Activated CD8-positive, alpha-beta T cell treated with anti-CD3 and anti-CD28 coated beads, Interleukin-2, amount 10 ng/mL, durations not matched to agents 7 days and 5 days (primary cell): ENCODE measurements at regions of chr22 and their contacts with region 1.

Region 1: DNA sequence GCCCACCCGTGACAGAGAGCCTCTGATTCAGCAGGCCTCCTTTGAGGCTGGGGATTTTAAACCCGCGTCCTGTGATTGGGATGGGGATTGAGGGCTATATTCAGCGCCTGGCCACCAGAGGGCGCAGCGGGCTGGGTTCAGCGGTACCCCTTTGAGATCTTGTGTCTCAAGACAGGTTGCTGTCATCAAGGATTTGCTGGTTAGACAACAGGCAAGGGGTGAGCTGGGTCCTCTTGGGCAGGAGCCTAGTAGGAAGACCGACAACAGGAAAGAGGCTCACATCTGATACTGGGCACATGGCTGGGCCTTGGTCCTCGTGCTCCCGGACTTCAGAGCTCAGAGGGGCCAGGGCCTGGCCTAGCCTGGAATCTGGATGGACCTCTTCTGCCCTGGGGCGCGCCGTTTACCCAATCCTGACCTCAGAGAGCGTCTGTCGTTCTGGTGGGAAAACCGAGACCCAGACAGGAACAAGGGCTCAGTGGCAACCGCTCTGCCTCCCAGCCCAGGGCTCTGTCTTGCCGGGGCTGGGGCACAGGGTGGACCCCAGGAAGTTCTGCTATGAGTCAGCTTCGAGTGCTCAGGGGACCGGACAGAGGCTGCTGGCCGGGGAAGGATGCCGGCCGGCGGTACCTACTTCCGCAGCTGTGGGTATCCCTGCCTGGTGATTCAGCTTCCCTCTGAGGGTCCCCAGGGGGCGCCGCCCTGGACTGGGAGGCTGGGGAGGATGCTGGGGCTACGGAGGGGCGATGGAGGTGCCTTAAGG is 929 bp upstream of the SLC35E4 start:
- DNase-seq: peak; percentile 92
- ATAC-seq: peak; percentile 67
- H3K4me3 Mint-ChIP-seq: peak overlapping the region; percentile 76
- H3K27ac Mint-ChIP-seq: peak overlapping the region; percentile 86
- H3K4me1 Mint-ChIP-seq: peaks cover 18% of the 10 kb centered on the region
- H3K27me3 Mint-ChIP-seq: no peaks in the 10 kb centered on the region

Region 2: DNA sequence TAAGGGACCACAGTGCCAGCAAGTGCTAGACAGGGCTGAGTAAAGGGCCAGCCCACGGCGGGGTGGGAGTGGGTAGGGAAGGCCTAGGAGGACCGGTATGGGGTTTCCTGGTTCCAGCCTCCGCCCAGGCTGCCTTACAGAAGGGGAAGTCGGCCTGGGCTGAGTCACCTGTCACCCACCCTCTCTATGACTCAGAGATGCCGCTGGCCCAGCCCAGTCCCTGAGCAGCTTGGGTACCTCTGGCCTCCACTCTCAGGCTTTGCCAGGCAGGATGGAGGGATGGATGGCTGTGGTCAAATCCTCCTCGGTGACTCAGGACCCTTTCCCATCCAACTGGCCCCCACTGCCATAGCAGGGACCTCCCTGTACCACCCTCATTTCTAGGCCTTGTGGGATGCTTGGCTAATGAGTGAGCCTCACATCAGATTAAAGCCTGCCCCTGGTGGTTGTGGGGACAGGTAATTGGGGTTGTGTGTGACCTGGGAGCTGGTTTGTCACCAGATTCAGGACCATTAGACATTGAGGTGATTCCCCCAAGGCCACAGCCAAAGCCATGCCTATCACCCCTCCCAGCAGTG is 14.9 kb after region 1 on chr22:
- CTCF ChIA-PET with region 1: interaction called, 57 read pairs
- POLR2A ChIA-PET with region 1: interaction called, 8 read pairs
- DNase-seq: peak; percentile 77
- ATAC-seq: peak; percentile 96
- H3K4me3 Mint-ChIP-seq: no peak overlapping the region
- H3K27ac Mint-ChIP-seq: peak overlapping the region; percentile 76
- H3K4me1 Mint-ChIP-seq: peaks cover 25% of the 10 kb centered on the region
- H3K27me3 Mint-ChIP-seq: no peaks in the 10 kb centered on the region

Region 3: DNA sequence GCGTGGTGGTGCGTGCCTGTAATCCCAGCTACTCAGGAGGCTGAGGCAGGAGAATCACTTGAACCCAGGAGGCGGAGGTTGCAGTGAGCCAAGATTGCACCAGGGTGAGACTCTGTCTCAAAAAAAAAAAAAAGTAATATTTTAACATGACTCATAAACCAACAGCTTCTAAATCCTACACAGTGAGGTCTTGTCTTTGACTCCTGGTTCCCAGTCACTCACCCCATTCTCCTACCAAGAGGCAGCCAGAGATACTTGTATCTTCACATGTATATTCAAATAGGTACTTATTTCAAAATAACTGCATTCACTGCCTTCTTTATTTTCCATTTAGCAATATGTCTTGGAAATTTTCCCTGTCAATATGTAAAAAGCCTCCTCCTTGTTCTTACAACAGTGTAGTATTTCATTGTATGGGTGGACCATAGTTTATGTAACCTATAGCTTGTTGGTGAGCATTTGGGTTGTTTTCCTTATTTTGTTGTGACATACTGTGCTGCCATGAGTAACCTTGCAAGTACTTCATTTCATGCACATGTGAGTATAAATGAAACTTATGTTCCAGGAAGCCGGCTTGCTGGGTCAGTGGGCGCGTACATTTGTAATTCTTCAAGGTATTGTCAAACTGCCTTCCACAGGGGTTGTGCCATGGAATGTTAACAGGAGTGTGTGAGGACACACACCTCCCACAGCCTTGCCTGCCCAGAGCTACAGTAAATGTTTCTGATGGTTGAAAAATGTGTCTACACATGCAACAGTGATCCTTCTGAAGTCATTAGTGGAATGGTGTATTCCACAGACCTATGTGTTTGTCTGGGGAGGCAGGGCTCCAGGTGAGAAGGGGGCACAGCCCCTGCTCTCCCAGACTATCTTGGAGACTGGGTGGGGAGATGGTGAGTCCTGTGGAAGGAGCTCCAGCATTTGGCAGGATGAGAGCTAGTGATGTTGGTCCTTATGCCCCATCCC is 107.9 kb after region 1 on chr22:
- CTCF ChIA-PET with region 1: interaction called, 65 read pairs
- POLR2A ChIA-PET with region 1: interaction called, 3 read pairs
- DNase-seq: no peak
- ATAC-seq: no peak
- H3K4me3 Mint-ChIP-seq: no peak overlapping the region
- H3K27ac Mint-ChIP-seq: peak overlapping the region; percentile 30
- H3K4me1 Mint-ChIP-seq: peaks cover 40% of the 10 kb centered on the region
- H3K27me3 Mint-ChIP-seq: no peaks in the 10 kb centered on the region

Region 4: DNA sequence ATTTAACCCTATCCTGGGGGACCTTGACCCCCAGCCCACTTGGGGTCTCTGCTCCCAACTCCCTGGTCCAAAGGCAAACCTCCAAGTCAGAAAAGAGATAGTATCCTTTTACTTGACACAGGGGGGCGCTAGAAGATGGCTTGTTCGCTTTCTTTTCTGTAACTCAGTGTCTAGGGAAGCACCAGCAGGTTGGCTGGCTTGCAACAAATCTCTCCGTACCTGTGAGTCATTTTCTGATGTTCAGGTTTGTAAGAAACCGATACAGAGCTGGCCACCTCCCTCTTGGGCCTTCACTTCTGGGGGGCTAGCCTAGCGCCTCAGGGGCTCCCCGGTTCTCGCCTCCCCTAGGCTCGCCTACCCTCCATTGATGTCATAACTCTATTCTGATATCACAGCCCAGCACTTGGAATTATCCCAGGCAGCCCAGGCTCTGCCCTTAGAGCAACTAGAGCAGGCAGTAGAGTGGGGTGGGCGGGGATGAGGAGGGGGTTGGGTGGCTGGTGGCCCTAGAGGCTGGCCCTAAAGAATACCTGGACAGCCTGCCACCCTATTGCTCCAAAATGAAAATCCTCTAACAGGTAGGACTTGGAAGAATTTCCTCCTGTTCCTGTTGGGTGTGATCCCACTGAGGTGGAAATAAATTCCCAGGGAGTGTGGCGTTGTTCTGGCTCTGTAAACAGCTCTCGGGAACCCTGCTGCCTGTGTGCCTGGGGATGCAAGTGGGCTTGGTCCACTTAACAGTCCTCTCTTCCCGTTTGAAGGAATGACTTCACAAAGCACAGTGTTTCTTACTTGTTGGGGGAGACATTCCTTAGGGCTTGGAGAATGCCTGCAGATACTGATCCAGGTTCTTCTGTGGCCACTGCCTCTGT is 129.4 kb after region 1 on chr22:
- CTCF ChIA-PET with region 1: interaction called, 11 read pairs
- POLR2A ChIA-PET with region 1: no interaction called
- DNase-seq: peak; percentile 74
- ATAC-seq: peak; percentile 81
- H3K4me3 Mint-ChIP-seq: no peak overlapping the region
- H3K27ac Mint-ChIP-seq: no peak overlapping the region
- H3K4me1 Mint-ChIP-seq: no peaks in the 10 kb centered on the region
- H3K27me3 Mint-ChIP-seq: peaks cover 3% of the 10 kb centered on the region

Region 5: DNA sequence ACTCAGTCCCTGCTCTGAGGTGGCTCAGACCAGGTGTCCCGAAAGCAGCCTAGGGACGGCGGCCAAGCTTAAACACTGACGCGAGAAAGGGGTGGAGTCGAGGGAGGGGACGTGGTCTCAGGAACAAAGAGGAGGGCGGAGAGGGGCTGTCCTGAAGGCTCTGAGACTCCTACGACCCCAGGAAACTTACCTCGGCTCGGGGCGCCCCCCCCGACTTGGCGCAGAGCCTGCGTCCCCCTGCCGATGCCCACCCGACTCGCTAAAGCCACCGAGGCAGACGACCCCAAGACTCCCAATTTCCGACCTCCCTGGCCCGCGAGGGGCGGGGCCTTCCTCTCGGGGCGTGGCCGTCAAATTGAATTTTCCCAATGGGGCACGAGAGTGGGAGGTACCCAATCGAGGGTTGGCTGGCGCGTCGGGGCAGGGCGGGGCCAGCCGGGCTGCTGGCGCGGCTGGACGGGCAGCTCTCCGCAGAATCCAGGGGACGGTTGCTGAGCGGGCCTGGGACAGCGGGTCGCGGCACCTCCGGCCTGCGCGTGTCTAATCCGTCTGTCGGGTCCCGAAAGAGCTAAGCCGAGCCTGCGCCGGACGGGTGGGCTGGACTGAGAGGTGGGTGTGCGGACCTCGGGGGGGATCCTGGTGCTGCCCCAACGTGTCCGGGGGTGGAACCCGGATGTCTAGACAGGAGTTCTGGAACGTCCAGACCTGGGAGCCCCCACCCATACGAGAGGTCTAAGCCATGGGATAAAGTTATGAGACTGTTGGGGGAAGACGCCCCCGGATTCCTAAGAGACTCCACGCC is 446.4 kb after region 1 on chr22 and contains the start of gene SMTN:
- CTCF ChIA-PET with region 1: interaction called, 10 read pairs
- POLR2A ChIA-PET with region 1: interaction called, 4 read pairs
- DNase-seq: peak; percentile 93
- ATAC-seq: peak; percentile 77
- H3K4me3 Mint-ChIP-seq: peak within 1 kb of the TSS; percentile 88
- H3K27ac Mint-ChIP-seq: peak within 1 kb of the TSS; percentile 86
- H3K4me1 Mint-ChIP-seq: peaks cover 37% of the 10 kb centered on the region
- H3K27me3 Mint-ChIP-seq: no peaks in the 10 kb centered on the region
- total RNA-seq, gene SMTN: 51.0 to 61.7 TPM